HepG2 (cell line): ENCODE measurements at regions of chr6 and their contacts with region 1.

Region 1: DNA sequence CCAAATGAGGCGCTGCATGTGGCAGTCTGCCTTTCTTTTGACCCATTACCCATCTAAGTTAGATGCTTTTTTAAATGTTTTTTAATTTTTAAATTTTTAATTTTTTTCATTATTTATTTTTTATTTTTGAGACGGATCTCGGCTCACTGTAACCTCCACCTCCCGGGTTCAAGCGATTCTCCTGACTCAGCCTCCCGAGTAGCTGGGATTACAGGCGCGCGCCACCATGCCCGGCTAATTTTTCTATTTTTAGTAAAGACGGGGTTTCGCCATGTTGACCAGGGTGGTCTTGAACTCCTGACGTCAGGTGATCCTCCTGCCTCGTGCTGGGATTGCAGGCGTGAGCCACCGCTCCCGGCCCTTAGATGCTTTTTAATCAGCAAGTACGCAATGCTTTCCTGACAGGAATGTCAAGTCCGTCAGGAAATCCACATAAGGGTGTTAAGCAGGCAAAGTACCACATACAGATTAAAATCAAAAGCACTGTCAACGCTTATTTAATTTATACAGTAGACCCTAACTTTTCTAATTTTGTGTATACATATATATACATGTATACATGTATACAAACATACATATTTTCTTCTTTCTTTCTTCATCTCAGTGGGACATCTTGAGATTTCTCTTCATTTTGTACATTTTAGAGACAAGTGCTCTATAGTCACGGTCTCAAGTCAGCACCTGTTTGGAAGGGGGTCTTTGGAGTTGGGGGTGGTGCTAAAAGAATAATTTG is 995 bp upstream of the GSTA4 start:
- DNase-seq: peak; percentile 76
- ATAC-seq: no peak
- H3K4me3 ChIP-seq: peak overlapping the region; percentile 34 to 68 (median 57)
- H3K27ac ChIP-seq: no peak overlapping the region
- H3K4me1 ChIP-seq: peaks cover 24% of the 10 kb centered on the region
- H3K27me3 ChIP-seq: no peaks in the 10 kb centered on the region
- CTCF ChIP-seq: no peak
- EP300 ChIP-seq: no peak
- POLR2A ChIP-seq: no peak
- RAD21 ChIP-seq: no peak

Region 2: GRCh38 chr6:52407467-52407866 is 588.6 kb before region 1 on chr6:
- CTCF ChIA-PET with region 1: no interaction called
- POLR2A ChIA-PET with region 1: no interaction called
- in situ Hi-C with region 1: no loop called
- intact Hi-C with region 1: loop called (anchors 5 kb)
- DNase-seq: peak; percentile 68
- ATAC-seq: peak; percentile 84
- H3K4me3 ChIP-seq: no peak overlapping the region
- H3K27ac ChIP-seq: no peak overlapping the region
- H3K4me1 ChIP-seq: 0 out of 2 replicates have a peak, but pooled peaks cover 15% of the 10 kb centered on the region
- H3K27me3 ChIP-seq: no peaks in the 10 kb centered on the region
- CTCF ChIP-seq: peak; percentile 67
- EP300 ChIP-seq: no peak
- POLR2A ChIP-seq: no peak
- RAD21 ChIP-seq: peak; percentile 66; the same call in 1 of the 2 replicates

Region 3: GRCh38 chr6:52724406-52725121 is 271.5 kb before region 1 on chr6:
- CTCF ChIA-PET with region 1: no interaction called
- POLR2A ChIA-PET with region 1: interaction called, 5 read pairs
- in situ Hi-C with region 1: no loop called
- intact Hi-C with region 1: loop called (anchors 2 kb)
- DNase-seq: peak; percentile 79
- ATAC-seq: peak; percentile 89
- H3K4me3 ChIP-seq: 0 out of 6 replicates have a peak overlapping the region, but pooled peaks of 1 of the 3 experiments have one; percentile 49
- H3K27ac ChIP-seq: peak overlapping the region; percentile 94
- H3K4me1 ChIP-seq: peaks cover 62% of the 10 kb centered on the region
- H3K27me3 ChIP-seq: no peaks in the 10 kb centered on the region
- CTCF ChIP-seq: peak; percentile 95
- EP300 ChIP-seq: no peak
- POLR2A ChIP-seq: no peak
- RAD21 ChIP-seq: peak; percentile 97

Region 4: DNA sequence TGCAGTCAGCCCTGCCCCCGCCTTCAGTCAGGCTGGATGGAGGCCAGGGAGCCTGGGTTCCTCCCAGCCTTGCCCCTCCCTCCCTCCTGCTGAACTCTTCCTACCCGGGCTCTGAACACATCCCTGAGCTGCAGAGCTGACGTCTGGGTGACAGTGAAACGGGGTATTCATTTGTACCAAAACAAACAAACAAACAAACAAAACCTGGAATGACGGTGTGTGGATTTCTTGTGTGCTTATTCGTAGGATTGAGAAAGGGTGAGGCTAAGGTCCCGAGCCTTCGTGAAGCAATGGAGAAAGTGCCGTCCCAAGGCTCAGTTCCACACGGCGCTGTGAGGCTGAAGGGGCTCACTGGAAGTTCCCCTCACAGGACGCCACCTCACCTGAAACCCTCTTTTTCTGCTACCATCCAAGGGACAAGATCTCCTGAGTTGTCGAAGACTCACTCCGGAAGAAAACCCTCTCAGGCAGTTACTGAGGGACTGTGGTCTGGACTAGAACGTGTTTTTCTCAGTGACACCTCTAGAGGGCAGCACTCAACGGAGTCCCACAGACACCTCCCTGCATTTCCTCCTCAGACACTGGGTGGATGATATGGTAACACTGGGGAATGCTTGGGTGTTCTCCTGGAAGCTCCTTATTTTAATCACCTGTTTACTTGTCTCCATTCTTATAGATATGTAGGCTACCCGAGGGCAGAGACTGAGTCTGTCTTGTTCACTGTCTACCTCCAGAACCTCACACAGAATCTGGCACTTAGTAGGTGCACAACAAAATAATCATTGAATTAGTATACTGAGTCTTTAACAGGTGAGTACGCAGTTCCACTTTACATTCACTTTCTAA is 113.9 kb before region 1 on chr6:
- CTCF ChIA-PET with region 1: interaction called, 3 read pairs
- POLR2A ChIA-PET with region 1: no interaction called
- in situ Hi-C with region 1: no loop called
- intact Hi-C with region 1: loop called (anchors 1 kb)
- DNase-seq: peak; percentile 69
- ATAC-seq: peak; percentile 99
- H3K4me3 ChIP-seq: peak overlapping the region; percentile 56 to 82 (median 65)
- H3K27ac ChIP-seq: no peak overlapping the region
- H3K4me1 ChIP-seq: peaks cover 6% of the 10 kb centered on the region; the same call in 1 of the 2 replicates
- H3K27me3 ChIP-seq: peaks cover 0 to 12% of the 10 kb centered on the region in 2 experiments; a peak in 3 of 5 replicates
- CTCF ChIP-seq: peak; percentile 95
- EP300 ChIP-seq: no peak
- POLR2A ChIP-seq: no peak
- RAD21 ChIP-seq: peak; percentile 65

Region 5: GRCh38 chr6:52922161-52922560 is 73.9 kb before region 1 on chr6:
- CTCF ChIA-PET with region 1: no interaction called
- POLR2A ChIA-PET with region 1: no interaction called
- in situ Hi-C with region 1: no loop called
- intact Hi-C with region 1: loop called (anchors 1 kb)
- DNase-seq: no peak
- ATAC-seq: no peak
- H3K4me3 ChIP-seq: no peak overlapping the region
- H3K27ac ChIP-seq: no peak overlapping the region
- H3K4me1 ChIP-seq: peaks cover 35% of the 10 kb centered on the region
- H3K27me3 ChIP-seq: no peaks in the 10 kb centered on the region; a peak in 2 of 5 replicates
- CTCF ChIP-seq: no peak
- EP300 ChIP-seq: no peak
- POLR2A ChIP-seq: no peak
- RAD21 ChIP-seq: no peak

Region 6: DNA sequence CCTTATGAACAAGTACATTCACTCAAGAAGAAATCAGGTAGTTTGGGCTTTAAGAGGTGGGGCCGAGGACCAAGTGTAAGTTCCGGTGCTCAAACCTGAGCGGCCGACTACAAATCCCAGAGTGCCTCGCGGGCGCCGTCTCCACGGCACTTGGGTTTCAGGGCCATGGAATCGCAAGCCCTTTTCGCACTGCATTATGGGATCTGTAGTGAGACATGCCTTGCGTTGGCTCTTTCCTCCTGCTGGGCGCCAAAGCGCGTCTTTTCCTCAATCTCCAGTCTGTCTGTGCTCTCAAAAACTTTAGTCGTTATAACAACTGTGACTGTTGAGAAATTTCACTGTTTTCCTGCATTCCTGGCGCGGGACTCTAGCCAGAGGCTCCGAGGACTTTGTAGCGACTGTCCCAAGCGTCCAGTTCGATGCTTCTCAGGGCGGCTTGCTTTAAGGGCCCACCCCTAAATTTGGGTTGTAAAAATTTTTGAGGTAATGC is 68.7 kb after region 1 on chr6:
- CTCF ChIA-PET with region 1: no interaction called
- POLR2A ChIA-PET with region 1: interaction called, 16 read pairs
- in situ Hi-C with region 1: no loop called
- intact Hi-C with region 1: no loop called
- DNase-seq: peak; percentile 98
- ATAC-seq: peak; percentile 74
- H3K4me3 ChIP-seq: peak overlapping the region; percentile 71 to 99 (median 92)
- H3K27ac ChIP-seq: peak overlapping the region; percentile 81
- H3K4me1 ChIP-seq: peaks cover 44% of the 10 kb centered on the region
- H3K27me3 ChIP-seq: no peaks in the 10 kb centered on the region; a peak in 1 of 5 replicates
- CTCF ChIP-seq: no peak; the same call in 1 of the 2 replicates
- EP300 ChIP-seq: 0 out of 4 replicates have a peak, but pooled peaks of 1 of the 2 experiments have one; percentile 11
- POLR2A ChIP-seq: peak in 1 of 2 experiments; percentile 39; a peak in 1 of 4 replicates
- RAD21 ChIP-seq: no peak

Region 7: GRCh38 chr6:53244958-53245357 is 248.9 kb after region 1 on chr6:
- CTCF ChIA-PET with region 1: no interaction called
- POLR2A ChIA-PET with region 1: no interaction called
- in situ Hi-C with region 1: no loop called
- intact Hi-C with region 1: no loop called
- DNase-seq: no peak
- ATAC-seq: no peak
- H3K4me3 ChIP-seq: no peak overlapping the region
- H3K27ac ChIP-seq: no peak overlapping the region
- H3K4me1 ChIP-seq: no peaks in the 10 kb centered on the region
- H3K27me3 ChIP-seq: no peaks in the 10 kb centered on the region
- CTCF ChIP-seq: no peak
- EP300 ChIP-seq: no peak
- POLR2A ChIP-seq: no peak
- RAD21 ChIP-seq: no peak